ENCODE measurements at regions of chr5 and their contacts with region 1.

Region 1: GRCh38 chr5:142433526-142434313 is 108.9 kb upstream of the SPRY4 start:
- DNase-seq: no peak
- H3K4me3 ChIP-seq: no peak overlapping the region
- H3K27ac ChIP-seq: no peak overlapping the region
- H3K4me1 ChIP-seq: no peaks in the 10 kb centered on the region
- H3K27me3 ChIP-seq: no peaks in the 10 kb centered on the region
- CTCF ChIP-seq: no peak
- EP300 ChIP-seq: no peak
- POLR2A ChIP-seq: no peak

Region 2: GRCh38 chr5:140868721-140869554 is 1564.8 kb before region 1 on chr5 and contains the start of gene PCDHA11:
- intact Hi-C with region 1: no loop called
- DNase-seq: no peak
- H3K4me3 ChIP-seq: no peak within 1 kb of the TSS
- H3K27ac ChIP-seq: no peak within 1 kb of the TSS
- H3K4me1 ChIP-seq: no peaks in the 10 kb centered on the region
- H3K27me3 ChIP-seq: no peaks in the 10 kb centered on the region
- CTCF ChIP-seq: no peak
- EP300 ChIP-seq: no peak
- POLR2A ChIP-seq: no peak
- total RNA-seq, gene PCDHA11: 0.23 to 0.79 (median 0.53) TPM

Region 3: DNA sequence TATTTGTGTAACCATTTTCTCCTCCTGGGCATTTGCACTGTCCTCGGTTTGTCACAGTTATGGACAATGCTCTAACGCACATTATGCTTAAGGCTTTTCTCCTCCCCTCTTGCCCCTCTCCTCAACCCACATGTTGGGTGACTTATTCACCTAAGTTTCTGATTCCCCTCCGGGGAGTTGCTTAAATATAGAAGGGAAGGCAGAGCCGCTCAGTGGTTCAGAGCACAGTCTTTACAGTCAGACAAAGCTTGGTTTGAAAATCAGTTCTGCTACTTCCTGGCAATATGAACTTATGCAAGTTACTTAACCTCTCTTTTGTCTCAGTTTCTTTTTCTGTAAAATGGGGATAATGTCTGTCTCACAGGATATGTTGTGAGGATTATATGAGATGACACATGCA is 67.7 kb before region 1 on chr5:
- intact Hi-C with region 1: loop called in 1 of 4 experiments (anchors 2 kb)
- DNase-seq: no peak
- H3K4me3 ChIP-seq: no peak overlapping the region
- H3K27ac ChIP-seq: no peak overlapping the region
- H3K4me1 ChIP-seq: peaks cover 1% of the 10 kb centered on the region
- H3K27me3 ChIP-seq: no peaks in the 10 kb centered on the region
- CTCF ChIP-seq: no peak
- EP300 ChIP-seq: no peak
- POLR2A ChIP-seq: no peak